RWPE1 (cell line): ENCODE measurements at regions of chr19 and their contacts with region 1.

Region 1: DNA sequence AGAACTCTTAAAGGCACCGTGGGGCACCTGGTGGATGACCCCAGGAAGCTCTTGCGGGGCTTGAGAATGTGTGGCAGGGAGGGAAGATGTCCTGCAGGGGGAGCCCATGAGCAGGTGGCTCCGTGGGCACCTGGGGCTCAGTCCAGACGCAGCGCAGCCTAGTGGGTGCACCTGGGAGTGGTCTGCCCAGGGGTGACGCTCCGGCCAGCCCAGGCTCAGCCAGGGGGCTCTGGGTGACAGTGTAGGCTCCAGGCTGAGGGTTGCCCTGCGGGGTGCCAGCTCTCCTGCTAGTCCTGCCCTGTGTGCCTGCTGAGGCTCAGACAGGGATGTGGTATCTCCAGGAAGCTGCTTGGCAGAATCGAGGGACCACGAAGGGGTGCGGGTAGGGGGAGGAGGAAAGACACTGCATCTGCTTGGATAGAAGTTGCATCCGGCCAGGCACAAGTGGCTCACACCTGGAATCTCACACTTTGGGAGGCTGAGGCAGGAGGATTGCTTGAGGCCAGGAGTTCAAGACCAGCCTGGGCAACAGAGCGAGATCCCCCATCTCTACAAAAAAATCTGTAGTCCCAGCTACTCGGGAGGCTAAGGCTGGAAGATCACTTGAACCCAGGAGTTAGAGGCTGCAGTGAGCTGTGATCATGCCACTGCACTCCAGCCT is 15.0 kb upstream of the PGLS start:
- DNase-seq: peak; percentile 66
- H3K27ac ChIP-seq: peak overlapping the region; percentile 27
- CTCF ChIP-seq: peak; percentile 94

Region 2: GRCh38 chr19:16885166-16885565 is 611.3 kb before region 1 on chr19:
- CTCF ChIA-PET with region 1: interaction called, 10 read pairs
- POLR2A ChIA-PET with region 1: no interaction called
- DNase-seq: no peak
- H3K27ac ChIP-seq: peak overlapping the region; percentile 94
- CTCF ChIP-seq: no peak

Region 3: GRCh38 chr19:17817668-17818363 is 321.3 kb after region 1 on chr19:
- CTCF ChIA-PET with region 1: interaction called, 3 read pairs
- POLR2A ChIA-PET with region 1: interaction called, 12 read pairs
- DNase-seq: no peak
- H3K27ac ChIP-seq: no peak overlapping the region
- CTCF ChIP-seq: no peak